Upper lobe of right lung (tissue), 1 donor: ENCODE measurements at regions of chr19 and their contacts with region 1.

Region 1: DNA sequence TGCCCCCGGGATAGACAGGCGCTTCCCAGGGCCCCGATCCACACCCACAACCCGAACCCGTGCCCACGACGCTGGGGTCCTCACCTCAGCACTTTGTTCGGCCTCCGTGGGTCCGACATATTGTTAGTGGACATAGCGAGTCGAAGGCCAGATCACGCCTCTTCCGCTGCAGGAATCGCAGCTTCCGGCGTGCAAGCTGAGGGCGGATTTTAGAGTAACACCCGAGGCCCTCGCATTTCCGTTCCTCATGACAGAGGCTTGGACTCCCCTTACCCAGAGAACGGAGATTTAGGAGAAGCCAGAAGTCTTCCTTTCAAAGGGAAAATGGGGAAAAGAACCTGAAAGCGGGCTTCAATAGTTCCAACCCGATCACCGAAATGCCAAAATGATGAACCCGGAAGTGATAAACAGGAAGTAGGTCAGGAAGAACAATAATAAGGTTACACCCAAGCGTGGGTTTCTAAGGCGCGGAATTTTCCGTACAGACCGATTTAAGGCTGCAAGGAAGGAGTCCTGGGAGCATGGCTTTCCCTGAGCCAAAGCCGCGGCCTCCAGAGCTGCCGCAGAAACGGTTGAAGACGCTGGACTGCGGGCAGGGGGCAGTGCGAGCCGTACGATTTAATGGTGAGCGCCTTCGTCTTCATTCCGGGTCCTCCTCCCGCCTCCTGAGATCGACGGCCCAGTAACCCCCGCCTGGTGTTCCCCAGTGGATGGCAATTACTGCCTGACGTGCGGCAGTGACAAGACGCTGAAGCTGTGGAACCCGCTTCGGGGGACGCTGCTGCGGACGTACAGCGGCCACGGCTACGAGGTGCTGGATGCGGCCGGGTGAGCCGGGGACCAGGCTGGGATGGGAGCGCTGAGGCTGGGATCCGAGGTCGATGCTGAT is 2.9 kb downstream of the WDR83 start:
- DNase-seq: peak; percentile 90
- ATAC-seq: peak; percentile 69
- H3K4me3 ChIP-seq: peak overlapping the region; percentile 92
- H3K27ac ChIP-seq: peak overlapping the region; percentile 98
- H3K4me1 ChIP-seq: peaks cover 37% of the 10 kb centered on the region
- H3K27me3 ChIP-seq: no peaks in the 10 kb centered on the region
- CTCF ChIP-seq: no peak

Region 2: DNA sequence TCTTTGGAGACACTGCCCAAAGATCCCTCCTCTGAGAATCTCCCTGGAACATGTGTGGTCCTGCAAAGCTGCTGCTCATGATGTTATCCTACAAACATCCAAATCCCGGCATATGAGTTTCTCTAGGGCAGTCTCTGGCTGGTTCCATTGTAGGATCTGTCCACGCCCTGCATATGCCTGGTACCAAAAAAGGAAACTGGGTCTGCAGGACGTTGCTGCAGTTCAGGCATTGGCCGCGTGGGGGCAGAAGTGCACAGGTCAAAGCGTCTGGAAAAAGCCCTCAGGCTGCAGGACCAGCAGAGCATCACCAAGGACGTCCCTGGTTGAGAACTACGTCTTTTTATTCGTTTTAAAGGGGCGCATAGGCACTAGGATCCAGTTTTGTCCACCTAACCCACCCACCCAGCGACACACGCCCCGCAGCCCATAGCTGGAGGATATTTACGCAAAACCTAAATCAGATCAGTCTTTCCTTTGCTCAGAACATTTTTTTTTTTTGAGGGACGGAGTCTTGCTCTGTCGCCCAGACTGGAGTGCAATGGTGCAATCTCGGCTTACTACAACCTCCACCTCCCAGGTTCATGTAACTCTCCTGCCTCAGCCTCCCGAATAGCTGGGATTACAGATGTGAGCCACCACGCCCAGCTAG is 105.4 kb before region 1 on chr19:
- intact Hi-C with region 1: loop called (anchors 10 kb)
- DNase-seq: peak; percentile 93
- ATAC-seq: peak; percentile 100
- H3K4me3 ChIP-seq: no peak overlapping the region
- H3K27ac ChIP-seq: no peak overlapping the region
- H3K4me1 ChIP-seq: no peaks in the 10 kb centered on the region
- H3K27me3 ChIP-seq: no peaks in the 10 kb centered on the region
- CTCF ChIP-seq: peak; percentile 97

Region 3: DNA sequence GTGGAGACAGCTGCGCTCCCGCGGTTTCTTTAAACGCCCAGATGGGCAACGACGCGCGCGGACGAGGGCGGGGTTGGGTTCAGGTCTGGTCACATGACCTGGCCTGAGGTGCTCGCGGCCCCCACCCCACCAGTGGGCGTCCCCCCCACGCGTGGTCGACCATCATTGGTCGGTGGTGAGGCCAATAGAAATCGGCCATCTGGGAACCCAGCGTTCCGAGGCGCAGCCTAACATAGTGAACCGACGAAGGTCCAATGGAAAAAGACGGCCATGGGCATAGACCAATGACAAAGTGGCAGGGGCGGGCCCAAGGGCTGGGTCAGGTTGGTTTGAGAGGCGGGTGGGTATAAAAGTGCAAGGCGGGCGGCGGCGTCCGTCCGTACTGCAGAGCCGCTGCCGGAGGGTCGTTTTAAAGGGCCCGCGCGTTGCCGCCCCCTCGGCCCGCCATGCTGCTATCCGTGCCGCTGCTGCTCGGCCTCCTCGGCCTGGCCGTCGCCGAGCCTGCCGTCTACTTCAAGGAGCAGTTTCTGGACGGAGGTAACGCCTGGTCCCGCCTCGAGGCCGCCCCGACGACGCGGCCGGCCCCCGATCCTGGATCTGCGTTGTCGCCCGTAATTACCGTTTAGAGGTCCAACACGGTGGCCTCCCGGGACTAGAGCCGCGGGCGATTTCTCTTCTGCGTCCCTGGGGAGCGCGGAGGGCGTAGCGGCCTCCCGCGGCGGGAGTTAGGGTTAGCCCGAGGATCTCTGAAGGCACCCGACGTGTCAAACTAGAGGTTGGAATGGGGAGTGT is 268.9 kb after region 1 on chr19 and contains the start of gene CALR:
- intact Hi-C with region 1: no loop called
- DNase-seq: peak; percentile 99
- ATAC-seq: peak; percentile 93
- H3K4me3 ChIP-seq: peak within 1 kb of the TSS; percentile 74
- H3K27ac ChIP-seq: peak within 1 kb of the TSS; percentile 85
- H3K4me1 ChIP-seq: peaks cover 35% of the 10 kb centered on the region
- H3K27me3 ChIP-seq: no peaks in the 10 kb centered on the region
- CTCF ChIP-seq: no peak
- total RNA-seq, gene CALR: 991 TPM